Activated naive CD4-positive, alpha-beta T cell treated with anti-CD3 and anti-CD28 coated beads for 36 hours (primary cell): ENCODE measurements at regions of chr16 and their contacts with region 1.

Region 1: DNA sequence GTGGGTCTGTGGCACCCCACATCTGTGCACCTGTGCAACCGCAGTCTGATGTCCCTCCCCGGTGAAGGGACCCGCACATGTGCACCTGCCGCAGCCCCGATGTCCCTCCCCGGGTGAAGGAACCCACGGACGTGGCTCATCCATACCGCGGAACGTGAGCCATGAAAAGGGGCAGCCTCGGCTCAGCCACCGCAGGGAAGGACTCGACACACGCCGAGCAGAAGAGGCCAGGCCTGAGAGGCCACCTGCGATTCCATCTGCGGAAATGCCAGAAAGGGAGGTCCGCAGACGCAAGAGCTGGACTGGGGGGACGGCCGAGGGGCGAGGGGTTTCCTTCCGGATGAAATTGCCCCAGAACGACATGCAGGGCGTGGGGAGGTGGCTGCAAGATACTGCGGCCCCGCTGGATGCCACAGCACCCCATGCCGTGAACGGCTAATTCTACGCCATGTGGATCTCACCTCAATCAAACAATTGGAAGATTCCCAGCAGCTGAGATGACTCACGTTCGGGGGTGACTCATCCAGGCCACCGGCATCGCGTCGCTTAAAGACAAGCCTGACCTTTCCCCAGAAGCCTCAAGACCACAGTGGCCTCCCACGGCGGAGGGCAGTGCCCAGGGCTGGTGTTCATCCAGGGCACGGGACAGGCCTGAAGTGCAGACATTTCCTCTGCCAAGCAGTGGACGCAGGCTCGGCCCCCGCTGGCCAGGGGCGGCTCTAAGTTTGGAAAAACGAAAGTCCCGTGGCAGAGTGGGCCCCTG is 21.0 kb downstream of the SOX8 start:
- DNase-seq: peak; percentile 94
- H3K4me3 Mint-ChIP-seq: no peak overlapping the region
- H3K27ac Mint-ChIP-seq: peak overlapping the region; percentile 72
- H3K4me1 Mint-ChIP-seq: peaks cover 63% of the 10 kb centered on the region
- H3K27me3 Mint-ChIP-seq: no peaks in the 10 kb centered on the region

Region 2: GRCh38 chr16:401468-402348 is 600.9 kb before region 1 on chr16 and contains the start of gene DECR2:
- CTCF ChIA-PET with region 1: no interaction called
- intact Hi-C with region 1: no loop called
- DNase-seq: peak; percentile 99
- H3K4me3 Mint-ChIP-seq: peak within 1 kb of the TSS; percentile 83
- H3K27ac Mint-ChIP-seq: peak within 1 kb of the TSS; percentile 83
- H3K4me1 Mint-ChIP-seq: peaks cover 17% of the 10 kb centered on the region
- H3K27me3 Mint-ChIP-seq: no peaks in the 10 kb centered on the region
- total RNA-seq, gene DECR2: 8.9 to 9.6 TPM

Region 3: GRCh38 chr16:964356-965042 is 38.1 kb before region 1 on chr16:
- CTCF ChIA-PET with region 1: interaction called, 4 read pairs
- intact Hi-C with region 1: loop called (anchors 2 kb)
- DNase-seq: peak; percentile 79
- H3K4me3 Mint-ChIP-seq: peak overlapping the region; percentile 66
- H3K27ac Mint-ChIP-seq: peak overlapping the region; percentile 96
- H3K4me1 Mint-ChIP-seq: peaks cover 38% of the 10 kb centered on the region
- H3K27me3 Mint-ChIP-seq: no peaks in the 10 kb centered on the region

Region 4: GRCh38 chr16:981695-982144 is 20.9 kb before region 1 on chr16 and contains the start of gene SOX8:
- CTCF ChIA-PET with region 1: no interaction called
- intact Hi-C with region 1: loop called (anchors 2 kb)
- DNase-seq: no peak
- H3K4me3 Mint-ChIP-seq: peak within 1 kb of the TSS; percentile 75
- H3K27ac Mint-ChIP-seq: no peak within 1 kb of the TSS
- H3K4me1 Mint-ChIP-seq: peaks cover 21% of the 10 kb centered on the region
- H3K27me3 Mint-ChIP-seq: peaks cover 3% of the 10 kb centered on the region
- total RNA-seq, gene SOX8: 0.74 to 1.0 TPM

Region 5: DNA sequence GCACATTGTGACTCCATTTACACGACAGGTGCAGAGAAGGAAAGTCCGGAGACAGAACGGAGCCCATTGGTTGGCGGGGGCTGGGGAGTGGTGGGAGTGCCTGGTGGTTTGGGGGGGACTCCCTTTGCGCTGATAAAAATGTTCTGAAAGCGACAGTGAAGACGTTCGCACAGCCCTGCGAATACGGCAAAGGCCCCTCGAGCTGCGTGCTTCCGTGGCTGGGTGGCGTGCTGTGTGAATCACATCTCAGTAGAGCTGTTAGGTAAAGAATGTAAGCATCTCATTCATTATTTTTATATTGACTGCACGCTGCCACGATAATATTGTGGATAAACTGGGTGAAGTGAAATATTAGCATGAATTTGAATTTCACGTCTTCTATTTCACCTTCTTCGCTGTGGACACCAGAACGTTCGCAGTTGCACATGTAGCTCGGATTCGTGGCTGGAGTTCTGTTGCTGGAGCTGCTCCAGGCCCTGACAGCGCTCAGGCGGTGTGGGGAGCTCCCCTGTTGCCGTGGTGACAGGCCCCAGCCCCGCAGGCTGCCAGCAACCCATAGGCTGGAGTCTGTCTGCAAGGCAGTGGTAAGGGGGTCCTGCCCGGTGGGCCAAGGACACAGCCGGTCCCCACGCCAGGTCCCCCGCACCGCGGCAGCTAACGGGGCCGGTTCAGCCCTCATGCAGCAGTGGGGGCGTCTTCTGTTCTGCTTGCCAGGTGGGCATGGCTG is 23.6 kb after region 1 on chr16:
- CTCF ChIA-PET with region 1: no interaction called
- intact Hi-C with region 1: no loop called
- DNase-seq: no peak
- H3K4me3 Mint-ChIP-seq: no peak overlapping the region
- H3K27ac Mint-ChIP-seq: no peak overlapping the region
- H3K4me1 Mint-ChIP-seq: peaks cover 5% of the 10 kb centered on the region
- H3K27me3 Mint-ChIP-seq: peaks cover 10% of the 10 kb centered on the region

Region 6: DNA sequence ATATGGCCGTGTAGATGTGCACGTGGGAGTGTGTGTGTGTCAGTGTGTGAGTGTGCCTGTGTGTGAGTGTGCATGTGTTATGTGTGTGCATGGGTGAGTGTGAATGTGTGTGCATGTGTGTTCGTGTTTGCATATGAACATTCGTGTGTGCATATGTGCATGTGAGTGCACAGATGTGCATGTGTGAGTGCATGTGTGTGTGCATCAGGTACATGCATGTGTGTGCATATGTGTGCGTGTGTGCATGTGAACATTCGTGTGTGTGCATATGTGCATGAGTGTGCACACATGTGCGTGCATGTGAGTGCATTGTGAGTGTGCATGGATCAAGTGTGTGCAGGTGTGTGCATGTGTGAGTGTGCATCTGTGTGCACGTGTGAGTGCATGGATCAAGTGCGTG is 235.4 kb after region 1 on chr16:
- CTCF ChIA-PET with region 1: no interaction called
- intact Hi-C with region 1: no loop called
- DNase-seq: no peak
- H3K4me3 Mint-ChIP-seq: no peak overlapping the region
- H3K27ac Mint-ChIP-seq: no peak overlapping the region
- H3K4me1 Mint-ChIP-seq: no peaks in the 10 kb centered on the region
- H3K27me3 Mint-ChIP-seq: no peaks in the 10 kb centered on the region